ENCODE measurements at regions of chr16 and their contacts with region 1.

Region 1: DNA sequence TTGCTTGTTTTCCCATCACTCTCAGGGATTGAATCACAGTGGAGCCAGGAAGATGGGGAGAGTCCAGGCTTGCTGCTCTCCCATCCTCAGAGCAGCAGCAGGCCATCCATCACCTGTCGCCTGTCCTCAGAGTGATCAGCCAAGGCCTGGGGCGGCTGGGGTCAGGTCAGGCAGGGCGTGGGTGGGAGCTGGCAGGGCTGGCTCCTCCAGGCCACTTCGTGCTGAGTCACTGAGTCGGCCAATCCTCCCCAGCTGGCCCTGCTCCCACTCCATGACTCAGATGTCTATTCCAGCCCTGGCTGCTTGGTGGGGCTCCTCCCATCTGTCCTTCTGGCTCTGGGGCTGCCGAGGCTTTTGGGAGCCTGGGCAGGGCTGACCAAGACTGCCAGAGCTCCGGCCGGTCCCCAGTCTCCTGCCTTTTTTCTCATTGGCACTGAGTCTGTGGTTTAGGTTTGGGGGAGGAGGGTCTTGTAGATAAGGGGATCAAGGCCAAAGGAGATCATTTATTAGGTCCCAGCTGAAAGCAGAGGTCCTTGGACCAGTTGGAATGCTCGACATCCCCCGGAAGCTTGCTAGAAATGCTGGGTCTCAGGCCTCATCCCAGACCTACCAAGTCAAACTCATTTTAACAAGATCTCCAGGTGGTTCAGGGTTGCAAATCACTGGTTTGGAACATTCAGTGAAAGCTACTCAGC is 72.7 kb downstream of the ABCC1 start:
- DNase-seq: peak; percentile 97
- ATAC-seq: peak; percentile 80
- H3K4me3 ChIP-seq: no peak overlapping the region
- H3K27ac ChIP-seq: peak overlapping the region; percentile 93
- H3K4me1 ChIP-seq: peaks cover 50% of the 10 kb centered on the region
- H3K27me3 ChIP-seq: no peaks in the 10 kb centered on the region
- CTCF ChIP-seq: no peak
- POLR2A ChIP-seq: peak; percentile 51; the same call in 1 of the 2 replicates
- RAD21 ChIP-seq: peak; percentile 33

Region 2: GRCh38 chr16:15874745-15875314 is 147.3 kb before region 1 on chr16:
- CTCF ChIA-PET with region 1: interaction called, 4 read pairs
- POLR2A ChIA-PET with region 1: no interaction called
- dilution Hi-C with region 1: no loop called
- in situ Hi-C with region 1: loop called (anchors 25 kb)
- intact Hi-C with region 1: loop called (anchors 2 kb)
- DNase-seq: peak; percentile 80
- ATAC-seq: peak; percentile 82
- H3K4me3 ChIP-seq: no peak overlapping the region
- H3K27ac ChIP-seq: peak overlapping the region; percentile 90
- H3K4me1 ChIP-seq: peaks cover 8% of the 10 kb centered on the region
- H3K27me3 ChIP-seq: no peaks in the 10 kb centered on the region
- CTCF ChIP-seq: peak; percentile 76
- POLR2A ChIP-seq: no peak
- RAD21 ChIP-seq: peak; percentile 78

Region 3: DNA sequence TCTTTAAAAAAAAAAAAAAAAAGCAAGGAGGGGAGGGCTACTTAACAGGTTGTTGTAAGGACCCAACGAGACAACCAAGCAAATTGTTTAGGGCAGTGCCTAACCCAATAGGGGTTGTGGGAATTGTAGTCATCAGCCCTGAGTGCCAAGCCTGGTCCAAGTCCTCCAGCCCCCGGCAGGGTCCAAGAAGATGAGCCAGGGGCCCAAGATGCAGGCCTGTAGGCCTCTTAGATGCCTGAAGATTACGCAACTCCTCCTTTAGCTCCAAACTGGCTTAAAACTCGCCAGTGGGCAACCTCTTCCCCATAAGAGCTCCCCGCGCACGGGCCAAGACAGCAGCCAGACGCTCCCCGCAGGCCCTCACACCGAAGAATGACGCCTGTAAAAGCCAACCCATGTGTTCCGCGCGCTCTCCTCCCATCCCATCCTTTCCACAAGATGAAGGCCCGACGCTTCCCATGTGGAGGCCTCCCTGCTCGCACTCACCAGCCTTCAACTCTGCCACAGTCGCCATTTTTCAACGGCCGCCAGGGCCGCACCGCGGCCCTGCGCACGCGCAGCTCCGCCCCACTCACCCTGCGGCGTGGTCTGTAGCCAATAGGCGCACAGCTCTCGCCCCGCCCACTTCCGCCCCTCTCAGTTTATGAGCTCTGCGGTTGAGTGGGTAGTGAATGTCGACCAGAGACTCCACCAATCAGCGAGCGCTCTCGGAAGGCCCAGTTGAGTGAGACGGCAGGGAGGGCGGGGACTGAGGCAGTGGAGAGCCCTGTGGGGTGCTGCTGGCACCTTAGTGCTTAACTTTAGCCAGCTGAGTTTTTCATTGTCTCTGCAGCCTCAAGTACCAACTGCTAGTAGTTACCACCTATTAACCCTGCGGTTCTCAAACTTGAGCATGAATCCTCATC is 133.8 kb before region 1 on chr16 and contains the start of gene CEP20:
- CTCF ChIA-PET with region 1: no interaction called
- POLR2A ChIA-PET with region 1: no interaction called
- dilution Hi-C with region 1: no loop called
- in situ Hi-C with region 1: loop called (anchors 25 kb)
- intact Hi-C with region 1: no loop called
- DNase-seq: peak; percentile 98
- ATAC-seq: peak; percentile 98
- H3K4me3 ChIP-seq: peak within 1 kb of the TSS; percentile 70
- H3K27ac ChIP-seq: peak within 1 kb of the TSS; percentile 84
- H3K4me1 ChIP-seq: peaks cover 14% of the 10 kb centered on the region
- H3K27me3 ChIP-seq: no peaks in the 10 kb centered on the region
- CTCF ChIP-seq: 0 out of 2 replicates have a peak, but pooled peaks have one; percentile 7
- POLR2A ChIP-seq: peak; percentile 92
- RAD21 ChIP-seq: no peak; the same call in 1 of the 2 replicates
- total RNA-seq, gene CEP20: 40.1 and 61.9 TPM in 2 replicates

Region 4: DNA sequence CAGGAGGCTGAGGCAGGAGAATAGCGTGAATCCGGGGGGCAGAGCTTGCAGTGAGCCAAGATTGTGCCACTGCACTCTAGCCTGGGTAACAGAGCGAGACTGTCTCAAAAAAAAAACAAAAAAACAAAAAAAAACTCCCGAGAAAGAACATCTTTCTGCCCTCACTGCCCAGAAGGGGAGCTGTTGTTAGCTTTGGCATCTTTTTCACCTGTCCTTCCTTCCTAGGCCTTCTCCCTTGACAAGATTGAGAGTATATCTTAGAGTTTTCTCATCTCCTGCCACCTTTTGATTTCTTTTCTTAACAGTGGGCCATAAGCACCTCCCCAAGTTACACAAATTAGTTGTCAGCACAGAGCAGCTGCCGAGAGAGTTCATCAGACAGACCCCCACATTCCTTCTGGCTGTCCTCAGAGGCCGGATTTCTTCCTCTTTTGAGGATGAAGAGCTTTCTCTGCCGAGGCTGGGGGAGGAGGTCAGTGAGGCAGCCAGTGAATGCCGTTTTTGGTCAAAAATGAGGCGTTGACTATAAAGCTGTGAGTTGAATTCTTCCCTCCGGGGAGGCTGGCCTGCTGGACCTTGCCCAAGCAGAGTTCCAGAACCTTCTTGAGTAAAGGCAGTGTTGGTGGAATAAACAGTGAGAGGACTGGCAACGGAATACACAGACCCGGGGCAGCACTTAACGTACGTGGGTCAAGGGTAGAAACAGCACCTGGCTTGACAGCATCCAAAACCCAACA is 74.2 kb after region 1 on chr16:
- CTCF ChIA-PET with region 1: no interaction called
- POLR2A ChIA-PET with region 1: no interaction called
- dilution Hi-C with region 1: no loop called
- in situ Hi-C with region 1: no loop called
- intact Hi-C with region 1: no loop called
- DNase-seq: peak; percentile 82
- ATAC-seq: peak; percentile 82
- H3K4me3 ChIP-seq: no peak overlapping the region
- H3K27ac ChIP-seq: peak overlapping the region; percentile 84
- H3K4me1 ChIP-seq: peaks cover 23% of the 10 kb centered on the region
- H3K27me3 ChIP-seq: no peaks in the 10 kb centered on the region
- CTCF ChIP-seq: peak; percentile 44
- POLR2A ChIP-seq: no peak
- RAD21 ChIP-seq: no peak; the same call in 1 of the 2 replicates